Left cardiac atrium (tissue), 4 donors: ENCODE measurements at regions of chr5 and their contacts with region 1.

Region 1: GRCh38 chr5:140664359-140665119 is at the start of gene WDR55:
- DNase-seq: peak; percentile 97
- ATAC-seq: peak; percentile 99
- total RNA-seq, gene WDR55: 11.0 to 15.4 TPM

Region 2: GRCh38 chr5:140547508-140548299 is 116.8 kb before region 1 on chr5 and contains the start of gene EIF4EBP3:
- intact Hi-C with region 1: loop called in 1 of 2 experiments (anchors 1 kb)
- DNase-seq: peak; percentile 98
- ATAC-seq: peak; percentile 96 to 97
- total RNA-seq, gene EIF4EBP3: 8.8 to 11.5 TPM

Region 3: DNA sequence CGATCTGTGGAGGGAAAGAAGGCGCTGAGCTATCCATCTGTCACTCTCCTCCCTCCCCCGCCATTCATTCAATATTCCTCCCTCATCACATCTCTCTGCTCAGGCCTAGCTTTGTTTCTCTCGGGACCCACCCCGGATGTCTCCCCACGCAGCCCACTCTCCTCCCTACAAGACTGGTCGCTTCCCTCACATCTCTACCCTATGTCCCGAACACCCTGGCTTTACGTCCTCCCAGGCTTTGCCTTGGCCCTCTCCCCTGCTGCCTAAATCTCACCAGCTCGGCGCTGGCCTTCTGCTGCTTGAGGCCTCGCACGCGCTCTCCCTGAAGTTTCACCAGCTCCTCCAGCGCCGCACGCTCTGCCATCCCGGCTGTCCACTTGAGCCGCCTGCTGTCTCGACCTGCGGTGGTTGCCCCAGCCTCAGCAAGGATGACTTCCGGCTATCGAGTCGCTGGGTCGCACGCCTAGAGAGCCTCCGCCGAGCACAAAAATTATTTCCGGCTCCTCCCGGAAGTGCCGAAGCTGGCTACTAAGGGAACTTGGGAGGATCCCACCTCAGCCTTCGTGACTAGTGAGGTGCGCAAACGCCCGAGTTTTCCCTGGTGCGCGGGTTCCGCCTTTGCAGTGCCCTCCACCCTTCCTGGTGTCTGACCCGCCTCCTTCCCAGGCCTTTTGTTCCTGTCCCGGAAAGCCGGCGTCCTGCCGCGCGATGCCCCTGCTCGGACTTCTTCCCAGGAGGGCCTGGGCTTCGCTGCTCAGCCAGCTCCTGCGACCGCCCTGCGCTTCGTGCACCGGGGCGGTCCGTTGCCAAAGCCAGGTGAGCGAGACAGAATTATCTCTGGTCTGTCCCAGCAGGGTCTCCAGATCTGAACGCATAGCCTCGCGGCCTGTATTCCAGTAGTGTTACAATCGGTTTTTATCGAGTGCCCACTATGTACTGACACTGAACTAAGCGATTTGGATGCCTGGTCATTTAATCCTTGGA is 26.7 kb after region 1 on chr5 and contains the starts of genes HARS1 and HARS2:
- intact Hi-C with region 1: loop called in 1 of 2 experiments (anchors 2 kb)
- DNase-seq: peak; percentile 93
- ATAC-seq: peak; percentile 98
- total RNA-seq, gene HARS1: 35.3 to 46.5 TPM
- total RNA-seq, gene HARS2: 19.2 TPM